ENCODE measurements at regions of chr1 and their contacts with region 1.

Region 1: GRCh38 chr1:110780600-110781484 is 92.1 kb upstream of the CD53 start:
- DNase-seq: peak; percentile 78
- H3K4me3 ChIP-seq: no peak overlapping the region
- H3K27ac ChIP-seq: no peak overlapping the region
- H3K4me1 ChIP-seq: no peaks in the 10 kb centered on the region
- H3K27me3 ChIP-seq: peaks cover 17% of the 10 kb centered on the region

Region 2: DNA sequence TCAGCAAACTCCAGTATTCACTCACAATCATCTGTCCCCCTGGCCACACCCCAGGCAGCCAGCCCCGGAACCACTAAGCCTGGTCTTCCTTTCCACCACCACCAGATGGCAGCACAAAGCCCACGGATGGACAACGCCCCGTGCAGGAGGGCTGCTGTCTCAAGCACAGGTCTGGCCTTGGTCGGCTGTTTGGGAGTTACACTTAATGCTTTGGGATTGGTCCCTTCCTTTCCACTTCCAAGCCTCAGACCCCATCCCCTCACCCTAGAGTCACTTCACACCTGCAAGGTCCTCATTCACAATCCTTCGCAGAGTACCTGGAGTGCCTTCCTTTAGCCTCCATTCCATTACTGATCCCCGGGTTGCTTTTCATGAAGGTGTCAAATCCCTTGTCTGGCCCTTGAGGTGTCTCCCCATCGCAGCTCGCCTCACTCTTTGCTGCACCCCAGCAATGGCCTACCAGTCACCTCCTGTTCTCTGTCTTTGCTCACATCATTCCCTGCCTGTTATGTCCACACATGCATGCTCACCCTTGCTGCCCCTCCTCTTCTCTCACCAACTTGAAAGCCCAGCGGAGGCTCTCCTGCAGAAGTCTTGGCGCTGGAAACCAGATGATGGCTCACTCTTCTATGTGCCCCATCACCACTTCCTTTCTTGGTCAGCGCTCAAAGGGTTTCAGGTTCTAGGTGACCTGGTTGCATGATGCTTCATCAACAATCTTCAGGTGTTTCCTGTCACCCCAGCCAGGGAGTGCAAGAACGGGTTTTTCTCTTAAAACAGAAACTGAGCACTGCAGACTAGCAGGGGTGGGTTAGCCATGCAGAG is 149.8 kb before region 1 on chr1:
- in situ Hi-C with region 1: loop called (anchors 10 kb)
- DNase-seq: peak; percentile 77
- H3K4me3 ChIP-seq: no peak overlapping the region
- H3K27ac ChIP-seq: no peak overlapping the region
- H3K4me1 ChIP-seq: no peaks in the 10 kb centered on the region
- H3K27me3 ChIP-seq: peaks cover 26% of the 10 kb centered on the region